ENCODE measurements at regions of chr1 and their contacts with region 1.

Region 1: DNA sequence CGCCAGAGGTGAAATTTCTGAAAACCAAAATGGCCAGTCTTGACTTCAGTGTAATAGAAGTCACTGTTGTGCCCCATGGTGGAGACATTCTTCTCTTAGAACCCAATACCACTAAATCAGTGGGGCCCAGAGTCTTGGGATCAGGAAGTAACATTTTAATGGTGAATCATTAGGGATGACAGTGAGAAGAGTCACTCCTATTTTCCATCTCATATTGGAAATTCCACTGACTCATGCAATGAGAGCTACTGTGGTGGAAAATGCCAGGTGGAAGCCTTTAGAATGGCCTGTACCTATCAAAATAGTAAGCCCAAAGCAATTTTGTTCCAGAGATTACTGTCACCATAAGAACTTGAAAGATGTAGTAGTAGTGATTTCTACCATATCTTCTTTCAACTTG is 20.6 kb upstream of the PPM1J start:
- DNase-seq: no peak
- H3K4me3 ChIP-seq: no peak overlapping the region
- H3K27ac ChIP-seq: no peak overlapping the region
- H3K4me1 ChIP-seq: peaks cover 4% of the 10 kb centered on the region
- CTCF ChIP-seq: no peak

Region 2: GRCh38 chr1:113057006-113057405 is 321.3 kb after region 1 on chr1:
- CTCF ChIA-PET with region 1: no interaction called
- POLR2A ChIA-PET with region 1: no interaction called
- intact Hi-C with region 1: loop called (anchors 10 kb)
- DNase-seq: peak; percentile 43
- H3K4me3 ChIP-seq: no peak overlapping the region
- H3K27ac ChIP-seq: no peak overlapping the region
- H3K4me1 ChIP-seq: peaks cover 11% of the 10 kb centered on the region
- CTCF ChIP-seq: no peak

Measured in OCI-LY7 (cell line).